ENCODE measurements at regions of chr2 and their contacts with region 1.

Region 1: GRCh38 chr2:135504811-135505210 is 26.2 kb downstream of the ZRANB3 start:
- DNase-seq: no peak
- H3K4me3 ChIP-seq: no peak overlapping the region
- H3K27ac ChIP-seq: no peak overlapping the region
- H3K4me1 ChIP-seq: no peaks in the 10 kb centered on the region
- H3K27me3 ChIP-seq: no peaks in the 10 kb centered on the region
- CTCF ChIP-seq: no peak

Region 2: DNA sequence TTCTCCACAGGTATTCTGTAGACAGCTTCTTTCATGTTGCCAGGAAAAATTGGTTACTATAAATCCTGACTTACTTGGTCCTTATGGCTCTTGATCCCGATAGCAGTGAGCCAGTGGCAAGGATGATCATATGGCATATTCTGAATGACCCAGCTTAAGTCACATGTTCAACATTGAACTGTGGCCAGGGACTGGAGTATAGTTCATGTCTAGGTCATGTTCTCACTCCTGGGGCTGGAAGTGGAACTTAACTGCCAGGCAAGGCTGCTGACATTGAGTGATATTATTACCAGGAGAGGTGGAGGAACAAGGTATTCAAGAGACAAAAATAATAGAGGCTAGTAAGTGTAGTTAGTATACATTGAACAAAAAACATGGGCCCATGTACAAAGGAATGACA is 52.7 kb after region 1 on chr2:
- intact Hi-C with region 1: loop called (anchors 10 kb)
- DNase-seq: no peak
- H3K4me3 ChIP-seq: no peak overlapping the region
- H3K27ac ChIP-seq: no peak overlapping the region
- H3K4me1 ChIP-seq: no peaks in the 10 kb centered on the region
- H3K27me3 ChIP-seq: no peaks in the 10 kb centered on the region
- CTCF ChIP-seq: no peak